ENCODE measurements at regions of chr7 and their contacts with region 1.

Region 1: DNA sequence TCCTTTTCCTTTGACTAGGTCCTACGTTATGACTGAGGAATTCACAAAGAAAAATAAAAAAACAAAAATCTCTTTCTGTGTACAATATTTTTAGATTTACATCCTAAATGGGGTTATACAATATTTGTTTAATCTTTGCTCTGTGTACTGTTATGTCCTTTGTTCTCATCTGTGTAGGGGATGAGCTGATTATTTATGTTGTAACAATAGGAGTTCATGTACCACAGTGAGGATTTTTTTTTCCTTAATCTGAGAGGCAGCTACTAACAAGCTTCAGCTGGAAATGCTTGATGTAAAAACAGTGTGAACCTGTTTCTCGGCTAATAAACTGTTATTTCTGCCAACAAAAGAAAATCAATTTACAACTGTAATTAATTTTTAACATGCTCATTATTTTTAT is 58.0 kb downstream of the ORC5 start:
- DNase-seq: no peak
- H3K4me3 ChIP-seq: no peak overlapping the region
- H3K27ac ChIP-seq: no peak overlapping the region
- H3K4me1 ChIP-seq: no peaks in the 10 kb centered on the region
- H3K27me3 ChIP-seq: no peaks in the 10 kb centered on the region
- CTCF ChIP-seq: no peak
- POLR2A ChIP-seq: no peak

Region 2: GRCh38 chr7:103573479-103574058 is 576.3 kb before region 1 on chr7:
- intact Hi-C with region 1: loop called (anchors 5 kb)
- DNase-seq: no peak
- H3K4me3 ChIP-seq: no peak overlapping the region
- H3K27ac ChIP-seq: no peak overlapping the region
- H3K4me1 ChIP-seq: no peaks in the 10 kb centered on the region
- H3K27me3 ChIP-seq: no peaks in the 10 kb centered on the region
- CTCF ChIP-seq: peak; percentile 33 to 72 (median 60)
- POLR2A ChIP-seq: no peak

Region 3: GRCh38 chr7:104679085-104679484 is 529.3 kb after region 1 on chr7:
- intact Hi-C with region 1: no loop called
- DNase-seq: no peak
- H3K4me3 ChIP-seq: no peak overlapping the region
- H3K27ac ChIP-seq: no peak overlapping the region
- H3K4me1 ChIP-seq: no peaks in the 10 kb centered on the region
- H3K27me3 ChIP-seq: no peaks in the 10 kb centered on the region
- CTCF ChIP-seq: no peak
- POLR2A ChIP-seq: no peak

Measured in prostate gland (tissue), 2 donors.